ENCODE measurements at regions of chr1 and their contacts with region 1.

Region 1: DNA sequence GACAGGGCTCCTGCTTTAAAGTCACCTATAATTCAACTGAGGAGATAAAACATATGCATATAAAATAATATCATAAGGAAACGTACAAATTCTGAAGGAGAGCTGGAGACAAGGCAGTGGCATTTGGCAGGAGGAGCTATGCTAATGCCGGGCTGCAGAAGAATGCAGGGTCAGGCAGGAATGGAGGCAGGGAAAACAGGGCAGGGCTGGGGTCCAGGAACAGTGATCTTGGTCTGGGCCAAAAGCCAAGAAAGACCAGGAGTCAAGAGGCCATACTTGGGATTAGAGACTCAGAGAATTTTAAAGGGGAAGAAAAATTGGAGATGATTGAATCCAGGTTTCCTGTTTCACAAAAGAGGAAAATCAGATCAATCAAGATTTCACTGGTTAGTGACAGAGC is 20.0 kb upstream of the BRDT start:
- DNase-seq: no peak
- ATAC-seq: no peak
- H3K4me3 ChIP-seq: no peak overlapping the region
- H3K4me3 Mint-ChIP-seq: no peak overlapping the region
- H3K27ac ChIP-seq: no peak overlapping the region
- H3K27ac Mint-ChIP-seq: no peak overlapping the region
- H3K4me1 ChIP-seq: peaks cover 0 to 3% of the 10 kb centered on the region in 2 donors
- H3K4me1 Mint-ChIP-seq: peaks cover 0 to 5% (median 0%) of the 10 kb centered on the region in 7 donors
- H3K27me3 ChIP-seq: no peaks in the 10 kb centered on the region
- H3K27me3 Mint-ChIP-seq: no peaks in the 10 kb centered on the region

Region 2: GRCh38 chr1:91404151-91405012 is 524.9 kb before region 1 on chr1 and contains the start of gene HFM1:
- CTCF ChIA-PET with region 1: no interaction called
- POLR2A ChIA-PET with region 1: no interaction called
- intact Hi-C with region 1: loop called in 1 of 2 experiments (anchors 5 kb)
- DNase-seq: peak; percentile 12 to 48 (median 38)
- ATAC-seq: peak; percentile 90
- H3K4me3 ChIP-seq: peak within 1 kb of the TSS; percentile 16
- H3K4me3 Mint-ChIP-seq: peak within 1 kb of the TSS; percentile 68 to 85 (median 79)
- H3K27ac ChIP-seq: peak within 1 kb of the TSS; percentile 29
- H3K27ac Mint-ChIP-seq: peak within 1 kb of the TSS in 4 of 9 donors; percentile 14 to 92 (median 36)
- H3K4me1 ChIP-seq: peaks cover 0 to 6% of the 10 kb centered on the region in 2 donors
- H3K4me1 Mint-ChIP-seq: peaks cover 0 to 14% (median 7%) of the 10 kb centered on the region in 7 donors
- H3K27me3 ChIP-seq: peaks cover 0 to 3% of the 10 kb centered on the region in 2 donors
- H3K27me3 Mint-ChIP-seq: peaks cover 27 to 74% (median 57%) of the 10 kb centered on the region in 5 donors
- total RNA-seq, gene HFM1: not detected

Region 3: GRCh38 chr1:92291372-92291999 is 362.2 kb after region 1 on chr1:
- CTCF ChIA-PET with region 1: no interaction called
- POLR2A ChIA-PET with region 1: no interaction called
- intact Hi-C with region 1: loop called in 1 of 2 experiments (anchors 5 kb)
- DNase-seq: peak in 4 of 9 donors; percentile 5 to 45 (median 41)
- ATAC-seq: peak; percentile 65
- H3K4me3 ChIP-seq: no peak overlapping the region
- H3K4me3 Mint-ChIP-seq: no peak overlapping the region
- H3K27ac ChIP-seq: no peak overlapping the region
- H3K27ac Mint-ChIP-seq: no peak overlapping the region
- H3K4me1 ChIP-seq: no peaks in the 10 kb centered on the region
- H3K4me1 Mint-ChIP-seq: peaks cover 18 to 31% (median 24%) of the 10 kb centered on the region in 7 donors
- H3K27me3 ChIP-seq: no peaks in the 10 kb centered on the region
- H3K27me3 Mint-ChIP-seq: no peaks in the 10 kb centered on the region

Region 4: GRCh38 chr1:92623187-92623778 is 694.0 kb after region 1 on chr1:
- CTCF ChIA-PET with region 1: no interaction called
- POLR2A ChIA-PET with region 1: no interaction called
- intact Hi-C with region 1: loop called in 1 of 2 experiments (anchors 2 kb)
- DNase-seq: peak in 6 of 9 donors; percentile 4 to 42 (median 35)
- ATAC-seq: peak; percentile 49
- H3K4me3 ChIP-seq: no peak overlapping the region
- H3K4me3 Mint-ChIP-seq: no peak overlapping the region
- H3K27ac ChIP-seq: no peak overlapping the region
- H3K27ac Mint-ChIP-seq: no peak overlapping the region
- H3K4me1 ChIP-seq: no peaks in the 10 kb centered on the region
- H3K4me1 Mint-ChIP-seq: no peaks in the 10 kb centered on the region
- H3K27me3 ChIP-seq: no peaks in the 10 kb centered on the region
- H3K27me3 Mint-ChIP-seq: peaks cover 0 to 4% (median 0%) of the 10 kb centered on the region in 5 donors